A673 (cell line): ENCODE measurements at regions of chr19 and their contacts with region 1.

Region 1: GRCh38 chr19:35693830-35694599 is 10.3 kb upstream of the ZBTB32 start:
- DNase-seq: peak; percentile 92
- H3K4me3 ChIP-seq: no peak overlapping the region
- H3K27ac ChIP-seq: no peak overlapping the region
- H3K4me1 ChIP-seq: no peaks in the 10 kb centered on the region
- H3K27me3 ChIP-seq: no peaks in the 10 kb centered on the region
- CTCF ChIP-seq: peak; percentile 98

Region 2: DNA sequence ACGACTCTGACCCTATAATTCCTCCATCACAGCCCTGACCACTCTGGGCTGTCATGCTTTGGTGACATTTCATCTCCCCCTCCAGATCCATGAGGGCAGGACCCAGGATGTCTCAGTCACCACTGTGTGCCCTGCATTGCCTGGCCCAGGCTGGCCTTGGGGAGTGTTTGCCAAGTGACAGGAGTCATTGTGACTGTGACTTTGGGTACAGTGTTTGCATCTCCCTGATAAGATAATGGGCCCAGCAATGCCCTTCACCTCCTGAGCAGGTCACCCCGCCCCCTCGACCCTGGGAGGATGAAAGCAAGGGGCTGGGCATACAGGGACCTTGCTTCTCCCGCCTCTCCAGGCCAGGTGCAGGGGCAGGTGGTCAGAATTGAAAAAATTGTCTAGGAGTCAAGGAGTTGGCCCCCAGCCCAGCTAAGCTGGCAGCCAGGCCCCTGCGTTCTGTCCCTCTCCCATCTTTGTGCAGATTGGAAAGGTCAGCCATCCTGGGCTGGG is 124.7 kb before region 1 on chr19:
- CTCF ChIA-PET with region 1: interaction called, 23 read pairs
- POLR2A ChIA-PET with region 1: no interaction called
- intact Hi-C with region 1: no loop called
- DNase-seq: no peak
- H3K4me3 ChIP-seq: no peak overlapping the region
- H3K27ac ChIP-seq: no peak overlapping the region
- H3K4me1 ChIP-seq: no peaks in the 10 kb centered on the region
- H3K27me3 ChIP-seq: peaks cover 8% of the 10 kb centered on the region
- CTCF ChIP-seq: no peak

Region 3: GRCh38 chr19:35740423-35741202 is 46.6 kb after region 1 on chr19:
- CTCF ChIA-PET with region 1: interaction called, 14 read pairs
- POLR2A ChIA-PET with region 1: no interaction called
- intact Hi-C with region 1: no loop called
- DNase-seq: peak; percentile 99
- H3K4me3 ChIP-seq: peak overlapping the region; percentile 65
- H3K27ac ChIP-seq: peak overlapping the region; percentile 77
- H3K4me1 ChIP-seq: peaks cover 3% of the 10 kb centered on the region
- H3K27me3 ChIP-seq: no peaks in the 10 kb centered on the region
- CTCF ChIP-seq: peak; percentile 38; the same call in 1 of the 2 replicates

Region 4: DNA sequence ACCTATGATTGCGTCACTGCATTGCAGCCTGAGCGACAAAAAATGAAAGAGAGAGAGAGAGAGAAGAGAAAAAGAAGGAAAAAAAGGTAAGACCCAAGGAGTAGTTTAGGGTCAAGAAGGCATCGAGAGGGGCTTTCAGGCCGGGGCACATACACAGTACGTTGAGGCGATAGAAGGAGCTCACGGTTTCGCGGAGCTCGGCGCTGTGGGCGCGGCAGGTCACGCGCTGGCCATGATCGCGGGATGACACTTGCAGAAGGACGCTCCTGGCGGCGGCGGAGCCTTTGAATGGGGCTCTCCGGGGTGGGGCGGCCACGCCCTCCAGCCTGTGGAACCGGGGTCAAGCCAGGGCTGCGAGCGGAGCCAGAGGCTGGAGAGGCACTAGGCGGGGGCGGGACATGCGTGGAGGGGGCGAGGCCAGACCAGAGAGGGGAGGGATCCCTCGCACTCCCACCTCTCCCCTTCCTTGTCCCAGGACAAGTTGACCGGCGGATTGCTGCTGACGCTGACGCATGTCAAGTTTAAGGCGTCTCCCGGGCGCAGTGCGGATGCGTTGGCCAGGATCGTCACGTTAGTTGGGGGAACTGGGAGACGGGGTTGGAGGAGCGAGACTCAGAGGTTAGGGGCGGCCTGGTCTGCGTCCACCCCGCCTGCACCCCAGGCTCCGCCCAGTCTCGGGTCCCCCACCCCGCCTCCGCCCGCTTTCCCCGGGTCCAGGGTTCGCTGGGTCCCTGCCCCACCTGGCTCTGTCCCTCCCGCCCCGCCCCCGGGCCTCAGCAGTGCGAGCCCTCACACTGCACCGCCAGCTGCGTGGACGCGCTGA is 151.4 kb after region 1 on chr19:
- CTCF ChIA-PET with region 1: no interaction called
- POLR2A ChIA-PET with region 1: interaction called, 16 read pairs
- intact Hi-C with region 1: no loop called
- DNase-seq: no peak
- H3K4me3 ChIP-seq: no peak overlapping the region
- H3K27ac ChIP-seq: no peak overlapping the region
- H3K4me1 ChIP-seq: no peaks in the 10 kb centered on the region
- H3K27me3 ChIP-seq: peaks cover 64% of the 10 kb centered on the region
- CTCF ChIP-seq: no peak